HEK293 (cell line): ENCODE measurements at regions of chr17 and their contacts with region 1.

Region 1: GRCh38 chr17:33674685-33675084 is 381.6 kb upstream of the ASIC2 start:
- H3K4me3 ChIP-seq: no peak overlapping the region
- H3K27ac ChIP-seq: no peak overlapping the region
- H3K4me1 ChIP-seq: no peaks in the 10 kb centered on the region
- CTCF ChIP-seq: peak; percentile 24; the same call in 1 of the 2 replicates

Region 2: GRCh38 chr17:33647956-33648355 is 26.7 kb before region 1 on chr17:
- CTCF ChIA-PET with region 1: interaction called, 15 read pairs
- POLR2A ChIA-PET with region 1: no interaction called
- H3K4me3 ChIP-seq: no peak overlapping the region
- H3K27ac ChIP-seq: no peak overlapping the region
- H3K4me1 ChIP-seq: no peaks in the 10 kb centered on the region
- CTCF ChIP-seq: peak; percentile 47; the same call in 1 of the 2 replicates

Region 3: DNA sequence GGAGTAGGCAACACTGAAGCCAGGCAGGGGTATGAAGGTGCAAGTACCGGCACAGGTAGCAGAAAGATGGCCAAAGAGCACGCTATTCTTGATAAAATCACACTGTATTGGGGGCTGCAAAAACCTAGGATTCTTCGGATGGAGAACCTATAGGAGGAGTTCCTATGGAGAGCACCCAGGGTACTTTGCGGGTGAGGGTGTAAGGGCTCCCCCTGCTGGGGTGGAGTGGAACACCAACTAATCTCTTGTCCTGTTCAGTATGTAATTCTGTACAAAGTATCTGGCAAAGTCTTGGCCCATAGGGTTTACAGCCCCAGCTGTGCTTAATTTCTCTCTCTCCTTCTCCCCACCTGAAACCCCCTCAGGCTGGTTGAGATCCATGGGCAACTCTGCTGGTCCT is 11.5 kb after region 1 on chr17:
- CTCF ChIA-PET with region 1: interaction called, 19 read pairs
- POLR2A ChIA-PET with region 1: no interaction called
- H3K4me3 ChIP-seq: no peak overlapping the region
- H3K27ac ChIP-seq: no peak overlapping the region
- H3K4me1 ChIP-seq: no peaks in the 10 kb centered on the region
- CTCF ChIP-seq: no peak

Region 4: DNA sequence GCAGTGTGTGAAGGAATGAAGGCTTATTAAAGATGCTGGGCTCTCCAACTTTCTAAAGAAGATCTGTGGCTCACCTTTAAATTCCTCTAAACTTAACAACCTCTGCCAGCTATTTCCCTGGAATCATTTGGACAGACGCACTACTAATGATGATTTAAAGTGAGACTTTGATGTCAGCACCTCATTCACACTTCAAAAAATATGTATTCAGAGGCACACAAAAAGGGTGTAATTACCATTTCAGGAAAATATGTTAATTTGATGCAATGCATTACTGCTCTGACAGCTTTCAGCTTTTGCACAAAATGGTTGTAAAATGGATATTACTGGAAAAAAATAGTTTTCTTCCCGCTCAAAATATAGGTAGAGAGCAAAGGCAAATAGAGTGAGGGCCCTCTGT is 42.3 kb after region 1 on chr17:
- CTCF ChIA-PET with region 1: no interaction called
- POLR2A ChIA-PET with region 1: no interaction called
- H3K4me3 ChIP-seq: no peak overlapping the region
- H3K27ac ChIP-seq: no peak overlapping the region
- H3K4me1 ChIP-seq: no peaks in the 10 kb centered on the region
- CTCF ChIP-seq: no peak

Region 5: GRCh38 chr17:33732116-33732515 is 57.4 kb after region 1 on chr17:
- CTCF ChIA-PET with region 1: no interaction called
- POLR2A ChIA-PET with region 1: no interaction called
- H3K4me3 ChIP-seq: no peak overlapping the region
- H3K27ac ChIP-seq: no peak overlapping the region
- H3K4me1 ChIP-seq: no peaks in the 10 kb centered on the region
- CTCF ChIP-seq: no peak